B cell (primary cell): ENCODE measurements at regions of chrX and their contacts with region 1.

Region 1: GRCh38 chrX:132488819-132489577 is at the start of gene MBNL3:
- DNase-seq: peak; percentile 87
- ATAC-seq: peak; percentile 67
- H3K4me3 ChIP-seq: peak within 1 kb of the TSS; percentile 61 to 76 (median 66)
- H3K4me3 Mint-ChIP-seq: peak within 1 kb of the TSS; percentile 95
- H3K27ac ChIP-seq: peak within 1 kb of the TSS; percentile 85 to 87
- H3K27ac Mint-ChIP-seq: peak within 1 kb of the TSS; percentile 98
- H3K4me1 ChIP-seq: peaks cover 51 to 53% of the 10 kb centered on the region in 2 donors
- H3K4me1 Mint-ChIP-seq: peaks cover 51% of the 10 kb centered on the region
- H3K27me3 ChIP-seq: no peaks in the 10 kb centered on the region
- H3K27me3 Mint-ChIP-seq: no peaks in the 10 kb centered on the region
- CTCF ChIP-seq: no peak
- total RNA-seq, gene MBNL3: 60.2 and 63.1 TPM in 2 replicates

Region 2: GRCh38 chrX:132435222-132435621 is 53.8 kb before region 1 on chrX:
- CTCF ChIA-PET with region 1: no interaction called
- POLR2A ChIA-PET with region 1: no interaction called
- intact Hi-C with region 1: loop called (anchors 10 kb)
- DNase-seq: no peak
- ATAC-seq: no peak
- H3K4me3 ChIP-seq: no peak overlapping the region
- H3K4me3 Mint-ChIP-seq: no peak overlapping the region
- H3K27ac ChIP-seq: no peak overlapping the region
- H3K27ac Mint-ChIP-seq: no peak overlapping the region
- H3K4me1 ChIP-seq: no peaks in the 10 kb centered on the region
- H3K4me1 Mint-ChIP-seq: peaks cover 2% of the 10 kb centered on the region
- H3K27me3 ChIP-seq: no peaks in the 10 kb centered on the region
- H3K27me3 Mint-ChIP-seq: no peaks in the 10 kb centered on the region
- CTCF ChIP-seq: no peak